Dendritic cell treated with granulocyte-macrophage colony-stimulating factor and Interleukin-4, amounts not matched to agents 40 ng/mL and 50 ng/mL, for 4 days (primary cell): ENCODE measurements at regions of chr11 and their contacts with region 1.

Region 1: GRCh38 chr11:61871158-61871597 is 20.2 kb downstream of the FADS3 start:
- H3K4me3 Mint-ChIP-seq: no peak overlapping the region
- H3K27ac Mint-ChIP-seq: peak overlapping the region; percentile 35
- H3K4me1 Mint-ChIP-seq: peaks cover 24% of the 10 kb centered on the region
- H3K27me3 Mint-ChIP-seq: peaks cover 23% of the 10 kb centered on the region

Region 2: DNA sequence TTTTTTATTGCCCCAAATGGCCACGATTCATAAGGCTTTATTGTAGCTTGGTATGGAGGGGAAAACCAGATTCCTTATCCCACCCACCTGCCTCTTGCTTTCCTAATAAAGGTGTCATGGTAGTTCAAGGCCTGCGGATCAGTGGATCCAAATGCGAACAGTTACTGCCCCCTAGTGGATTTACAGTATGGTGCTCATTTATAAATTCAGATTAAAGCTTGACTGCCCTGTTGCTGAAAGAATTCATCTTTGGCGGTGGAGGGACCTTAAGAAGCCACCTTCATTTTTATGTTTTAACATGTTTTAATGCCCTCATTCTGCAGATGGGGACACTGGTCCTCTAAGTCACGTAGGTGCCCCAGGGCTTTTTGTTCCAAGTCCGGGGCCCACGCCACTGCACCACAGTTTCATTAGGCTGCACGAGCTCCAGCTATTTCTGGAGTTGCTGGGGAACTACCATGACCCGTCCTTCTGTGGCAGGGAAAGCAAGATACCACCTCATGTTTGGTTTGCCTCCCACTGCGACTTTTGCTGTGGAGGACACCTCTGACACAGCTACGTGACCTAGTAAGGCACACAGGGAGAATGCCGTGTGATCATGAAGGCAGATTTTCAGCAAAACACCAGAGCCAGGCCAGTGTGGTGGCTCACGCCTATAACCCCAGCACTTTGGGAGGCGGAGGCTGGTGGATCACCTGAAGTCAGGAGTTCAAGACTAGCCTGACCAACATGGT is 237.0 kb after region 1 on chr11:
- intact Hi-C with region 1: loop called (anchors 1 kb)
- H3K4me3 Mint-ChIP-seq: no peak overlapping the region
- H3K27ac Mint-ChIP-seq: no peak overlapping the region
- H3K4me1 Mint-ChIP-seq: peaks cover 18% of the 10 kb centered on the region
- H3K27me3 Mint-ChIP-seq: peaks cover 12% of the 10 kb centered on the region